Activated T-helper 1 cell treated with anti-CD3 and anti-CD28 coated beads, Interleukin-12 subunit alpha, Interleukin-12 subunit beta, Interleukin-2, Interleukin-4 antibody, amounts not matched to agents 30 ng/mL and 10 ng/mL and 1 ng/mL, durations not matched to agents 14 hours and 24 hours and 36 hours (primary cell): ENCODE measurements at regions of chr4 and their contacts with region 1.

Region 1: GRCh38 chr4:89434364-89434988 is 126.9 kb upstream of the GPRIN3 start:
- DNase-seq: peak; percentile 5
- H3K4me3 Mint-ChIP-seq: no peak overlapping the region
- H3K27ac Mint-ChIP-seq: no peak overlapping the region
- H3K4me1 Mint-ChIP-seq: peaks cover 29% of the 10 kb centered on the region
- H3K27me3 Mint-ChIP-seq: no peaks in the 10 kb centered on the region

Region 2: GRCh38 chr4:89226665-89227574 is 207.6 kb before region 1 on chr4:
- intact Hi-C with region 1: loop called (anchors 1 kb)
- DNase-seq: peak; percentile 62
- H3K4me3 Mint-ChIP-seq: peak overlapping the region; percentile 28
- H3K27ac Mint-ChIP-seq: no peak overlapping the region
- H3K4me1 Mint-ChIP-seq: peaks cover 11% of the 10 kb centered on the region
- H3K27me3 Mint-ChIP-seq: no peaks in the 10 kb centered on the region

Region 3: GRCh38 chr4:89307446-89308160 is 126.9 kb before region 1 on chr4 and contains the start of gene GPRIN3:
- intact Hi-C with region 1: loop called (anchors 5 kb)
- DNase-seq: peak; percentile 58
- H3K4me3 Mint-ChIP-seq: peak within 1 kb of the TSS; percentile 95
- H3K27ac Mint-ChIP-seq: peak within 1 kb of the TSS; percentile 97
- H3K4me1 Mint-ChIP-seq: peaks cover 72% of the 10 kb centered on the region
- H3K27me3 Mint-ChIP-seq: no peaks in the 10 kb centered on the region
- total RNA-seq, gene GPRIN3: 37.1 and 39.0 TPM in 2 replicates

Region 4: GRCh38 chr4:89469930-89470375 is 35.5 kb after region 1 on chr4:
- intact Hi-C with region 1: loop called (anchors 5 kb)
- DNase-seq: peak; percentile 19
- H3K4me3 Mint-ChIP-seq: peak overlapping the region; percentile 16
- H3K27ac Mint-ChIP-seq: peak overlapping the region; percentile 18
- H3K4me1 Mint-ChIP-seq: peaks cover 21% of the 10 kb centered on the region
- H3K27me3 Mint-ChIP-seq: no peaks in the 10 kb centered on the region

Region 5: DNA sequence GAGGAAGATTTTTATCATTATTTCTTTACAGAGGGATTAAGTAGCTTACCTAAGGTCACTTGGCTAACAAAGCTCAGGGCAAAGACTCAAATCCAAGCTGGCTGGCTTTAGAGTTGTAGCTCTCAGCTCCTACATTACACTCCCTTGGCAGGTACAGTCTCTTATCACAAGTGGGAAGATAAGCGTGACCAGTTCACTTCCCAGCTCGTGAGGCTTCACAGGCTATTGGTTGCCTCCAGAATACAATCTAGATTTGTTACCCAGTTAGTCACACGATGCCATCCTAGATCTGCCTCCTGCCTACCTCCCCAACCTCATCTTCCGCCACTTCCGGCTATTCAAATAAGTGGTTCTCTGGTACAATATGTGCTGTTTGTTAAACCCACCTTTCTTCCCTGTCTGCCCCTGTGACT is 463.8 kb after region 1 on chr4:
- intact Hi-C with region 1: loop called (anchors 1 kb)
- DNase-seq: no peak
- H3K4me3 Mint-ChIP-seq: no peak overlapping the region
- H3K27ac Mint-ChIP-seq: no peak overlapping the region
- H3K4me1 Mint-ChIP-seq: peaks cover 15% of the 10 kb centered on the region
- H3K27me3 Mint-ChIP-seq: no peaks in the 10 kb centered on the region